Heart left ventricle (tissue), 16 donors: ENCODE measurements at regions of chr4 and their contacts with region 1.

Region 1: GRCh38 chr4:184538023-184538599 is 63.8 kb upstream of the IRF2 start:
- DNase-seq: peak; percentile 90 to 92 (median 91)
- ATAC-seq: peak; percentile 91 to 94 (median 92)
- H3K4me3 ChIP-seq: peak overlapping the region; percentile 50 to 82 (median 67)
- H3K27ac ChIP-seq: peak overlapping the region; percentile 91 to 99 (median 95)
- H3K4me1 ChIP-seq: peaks cover 0 to 43% (median 25%) of the 10 kb centered on the region in 12 donors
- H3K27me3 ChIP-seq: no peaks in the 10 kb centered on the region
- CTCF ChIP-seq: peak; percentile 50 to 86 (median 72)
- POLR2A ChIP-seq: no peak

Region 2: DNA sequence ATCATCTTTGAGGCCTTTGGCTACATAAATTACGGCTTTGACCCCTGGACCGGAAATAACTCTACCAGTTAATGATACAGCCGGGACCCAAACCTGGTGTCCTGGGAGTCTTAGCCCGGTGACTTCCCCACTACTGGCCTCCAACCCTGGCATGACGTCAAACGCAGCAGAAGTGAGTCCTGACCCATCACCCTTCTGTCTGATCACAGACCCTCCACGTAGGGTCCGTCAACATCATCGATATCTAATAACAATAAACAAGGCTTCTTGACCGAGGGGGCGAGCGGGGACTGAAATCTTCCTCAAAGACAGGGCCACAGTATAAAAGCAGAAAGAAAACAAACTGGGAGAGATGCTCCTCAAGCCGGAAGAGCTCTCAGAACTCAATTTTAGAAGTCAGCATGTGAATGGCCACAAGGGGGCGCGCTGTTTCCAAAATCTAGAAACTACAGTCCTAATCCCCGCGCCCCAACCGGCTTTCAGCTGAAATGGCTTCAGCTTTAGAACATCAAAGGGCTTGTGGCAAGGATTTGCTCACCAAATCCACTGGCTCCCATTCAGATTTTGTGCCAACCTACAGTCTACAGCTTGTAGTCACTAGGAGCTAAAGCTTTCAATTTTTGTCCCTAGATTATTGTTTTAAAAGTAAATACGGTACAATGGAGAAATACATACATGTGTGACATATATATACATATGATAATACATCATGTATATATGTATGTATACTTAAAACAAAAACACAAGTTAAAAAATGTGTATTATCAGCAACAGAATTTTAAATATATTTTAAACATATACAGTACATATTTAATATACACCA is 274.0 kb before region 1 on chr4:
- intact Hi-C with region 1: loop called (anchors 1 to 5 kb)
- DNase-seq: peak; percentile 91 to 94 (median 93)
- ATAC-seq: peak; percentile 63 to 85 (median 82)
- H3K4me3 ChIP-seq: no peak overlapping the region
- H3K27ac ChIP-seq: peak overlapping the region in 1 of 12 donors; percentile 1
- H3K4me1 ChIP-seq: peaks cover 0 to 39% (median 0%) of the 10 kb centered on the region in 12 donors
- H3K27me3 ChIP-seq: no peaks in the 10 kb centered on the region
- CTCF ChIP-seq: peak; percentile 86 to 99 (median 94)
- POLR2A ChIP-seq: no peak

Region 3: GRCh38 chr4:184310171-184310567 is 227.9 kb before region 1 on chr4:
- intact Hi-C with region 1: loop called in 1 of 10 experiments (anchors 1 kb)
- DNase-seq: peak in 2 of 5 donors; percentile 33 to 63
- ATAC-seq: peak in 3 of 4 donors; percentile 63 to 71 (median 68)
- H3K4me3 ChIP-seq: no peak overlapping the region
- H3K27ac ChIP-seq: no peak overlapping the region
- H3K4me1 ChIP-seq: peaks cover 0 to 26% (median 2%) of the 10 kb centered on the region in 12 donors
- H3K27me3 ChIP-seq: no peaks in the 10 kb centered on the region
- CTCF ChIP-seq: peak in 4 of 12 donors; percentile 11 to 25 (median 19)
- POLR2A ChIP-seq: no peak

Region 4: GRCh38 chr4:184384056-184384809 is 153.9 kb before region 1 on chr4:
- intact Hi-C with region 1: loop called in 6 of 10 experiments (anchors 2 to 10 kb)
- DNase-seq: peak in 1 of 5 donors; percentile 31
- ATAC-seq: peak; percentile 5 to 72 (median 34)
- H3K4me3 ChIP-seq: peak overlapping the region in 9 of 12 donors; percentile 5 to 42 (median 28)
- H3K27ac ChIP-seq: peak overlapping the region; percentile 60 to 96 (median 90)
- H3K4me1 ChIP-seq: peaks cover 18 to 78% (median 64%) of the 10 kb centered on the region in 12 donors
- H3K27me3 ChIP-seq: no peaks in the 10 kb centered on the region
- CTCF ChIP-seq: no peak
- POLR2A ChIP-seq: peak in 1 of 2 donors; percentile 6

Region 5: DNA sequence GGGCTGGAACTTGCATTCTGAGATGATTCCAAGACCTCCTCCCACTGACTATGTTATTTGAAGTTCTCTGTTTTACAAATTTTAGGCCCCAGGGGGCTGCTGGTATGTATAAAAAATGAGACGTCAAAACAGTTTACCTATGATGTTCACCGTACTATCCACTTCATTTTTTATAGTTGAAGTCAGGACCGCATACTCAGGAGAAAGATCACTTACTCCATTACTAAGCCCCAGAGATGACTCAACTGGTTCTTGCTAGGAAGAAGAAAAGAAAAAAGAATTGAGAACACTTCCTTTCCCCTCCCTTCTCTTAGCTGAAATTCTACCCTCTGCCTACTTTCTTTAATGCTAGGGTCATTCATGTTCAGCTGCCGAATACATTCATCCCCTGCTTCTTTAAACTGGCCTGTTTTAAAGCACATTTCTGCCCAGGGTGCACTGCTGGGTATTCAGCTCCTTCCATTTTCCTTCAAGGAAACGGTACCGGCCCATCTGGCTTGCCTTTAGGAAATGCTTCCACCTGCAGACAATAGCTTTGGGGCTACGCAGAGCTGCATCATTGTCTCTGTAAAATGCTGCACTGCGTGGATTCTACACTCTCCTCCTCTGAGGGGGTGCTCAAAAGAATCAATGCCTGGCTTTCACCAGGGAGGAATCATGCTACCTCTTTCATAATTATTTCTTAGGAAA is 129.9 kb before region 1 on chr4:
- intact Hi-C with region 1: loop called in 4 of 10 experiments (anchors 5 to 10 kb)
- DNase-seq: no peak
- ATAC-seq: no peak
- H3K4me3 ChIP-seq: no peak overlapping the region
- H3K27ac ChIP-seq: peak overlapping the region in 11 of 12 donors; percentile 44 to 78 (median 62)
- H3K4me1 ChIP-seq: peaks cover 0 to 78% (median 57%) of the 10 kb centered on the region in 12 donors
- H3K27me3 ChIP-seq: no peaks in the 10 kb centered on the region
- CTCF ChIP-seq: no peak
- POLR2A ChIP-seq: no peak

Region 6: GRCh38 chr4:184762100-184762499 is 224.0 kb after region 1 on chr4:
- intact Hi-C with region 1: no loop called
- DNase-seq: no peak
- ATAC-seq: peak in 1 of 4 donors; percentile 38
- H3K4me3 ChIP-seq: no peak overlapping the region
- H3K27ac ChIP-seq: peak overlapping the region in 3 of 12 donors; percentile 16 to 74 (median 18)
- H3K4me1 ChIP-seq: peaks cover 0 to 28% (median 7%) of the 10 kb centered on the region in 12 donors
- H3K27me3 ChIP-seq: no peaks in the 10 kb centered on the region
- CTCF ChIP-seq: no peak
- POLR2A ChIP-seq: no peak

Region 7: DNA sequence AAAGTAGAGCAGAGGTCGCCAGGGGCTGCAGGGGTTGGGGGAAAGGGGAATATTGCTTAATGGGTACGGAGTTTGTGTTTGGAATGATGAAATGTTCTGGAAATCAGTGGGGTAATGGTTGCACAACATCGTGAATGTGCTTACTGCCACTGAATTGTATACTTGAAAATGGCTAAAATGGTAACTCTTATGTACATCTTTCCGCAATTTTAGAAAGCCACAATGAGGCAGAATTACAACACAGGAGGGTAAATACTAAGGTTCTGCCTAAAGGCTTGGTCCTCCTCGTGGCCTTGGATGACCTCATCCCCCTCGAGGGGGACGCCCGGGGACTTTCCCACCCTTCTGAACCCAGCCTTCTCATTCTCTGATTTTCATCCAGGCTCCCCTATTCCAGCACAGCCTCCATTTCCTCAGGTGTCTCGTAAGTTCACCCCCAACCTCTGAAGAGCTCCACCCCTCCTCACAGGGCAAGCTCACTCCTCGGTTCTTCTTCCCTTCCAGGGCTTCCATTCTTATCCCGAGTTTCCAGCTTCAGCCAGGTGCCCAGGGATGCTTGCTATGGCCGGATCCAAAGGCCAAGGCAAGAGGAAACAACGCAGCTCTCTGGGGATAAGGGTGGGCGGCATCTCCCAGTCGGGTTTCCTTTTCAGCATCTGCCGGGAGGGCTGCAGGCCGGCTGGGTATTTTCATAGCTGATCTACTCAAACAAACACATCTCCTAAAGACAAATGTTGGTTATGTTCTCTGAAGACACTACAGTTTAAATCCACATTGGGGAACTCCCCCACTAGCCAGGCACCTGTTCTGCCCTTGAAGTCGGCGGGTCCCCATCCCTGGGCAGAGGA is 359.0 kb after region 1 on chr4:
- intact Hi-C with region 1: no loop called
- DNase-seq: peak in 1 of 5 donors; percentile 48
- ATAC-seq: peak; percentile 30 to 71 (median 36)
- H3K4me3 ChIP-seq: no peak overlapping the region
- H3K27ac ChIP-seq: peak overlapping the region in 1 of 12 donors; percentile 62
- H3K4me1 ChIP-seq: peaks cover 0 to 60% (median 4%) of the 10 kb centered on the region in 12 donors
- H3K27me3 ChIP-seq: peaks cover 0 to 3% (median 0%) of the 10 kb centered on the region in 9 donors
- CTCF ChIP-seq: no peak
- POLR2A ChIP-seq: no peak